ENCODE measurements at regions of chr16 and their contacts with region 1.

Region 1: DNA sequence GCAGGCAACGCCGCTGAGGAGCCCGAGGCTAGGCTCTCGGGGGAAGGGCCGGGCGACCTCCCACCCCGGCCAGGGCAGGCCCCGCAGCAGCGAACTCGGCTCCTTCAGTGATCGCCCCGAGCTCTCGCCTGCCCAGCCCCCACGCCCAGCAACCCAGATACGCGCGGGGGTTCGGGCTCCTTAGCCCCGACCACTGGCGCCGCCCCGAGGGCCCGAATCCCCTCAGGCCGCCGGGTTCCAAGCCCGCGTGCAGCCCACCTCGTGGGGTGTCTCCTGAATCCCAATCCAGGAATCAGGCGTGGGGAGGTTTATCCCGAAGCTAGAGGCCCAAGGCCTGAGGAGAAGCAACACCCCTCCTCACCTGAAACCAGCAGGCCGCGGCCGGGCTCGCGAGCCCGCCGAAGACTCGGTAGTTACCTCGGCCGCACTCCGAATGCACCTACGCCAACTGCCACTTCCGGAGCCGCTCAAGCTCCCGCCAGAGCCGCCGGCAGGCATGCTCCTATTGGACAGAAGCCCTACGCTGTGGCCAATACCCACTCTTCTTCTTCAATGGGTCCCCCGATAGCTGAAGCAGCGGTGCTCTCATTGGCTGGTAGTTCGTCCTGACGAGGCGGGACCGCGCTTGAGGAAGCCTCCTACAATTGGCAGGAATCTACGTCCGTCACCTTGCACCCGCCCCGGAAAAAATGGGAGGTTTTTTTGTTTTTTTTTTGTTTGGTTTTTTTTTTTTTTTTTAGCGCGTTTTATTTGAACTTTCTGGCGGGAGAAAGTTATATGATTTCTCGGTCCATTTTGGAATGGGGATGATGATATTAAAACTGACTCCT is at the start of gene RFWD3:
- DNase-seq: peak; percentile 96
- ATAC-seq: peak; percentile 100
- H3K4me3 ChIP-seq: peak within 1 kb of the TSS; percentile 98
- H3K27ac ChIP-seq: peak within 1 kb of the TSS; percentile 70
- H3K4me1 ChIP-seq: no peaks in the 10 kb centered on the region; the same call in 1 of the 2 replicates
- H3K27me3 ChIP-seq: no peaks in the 10 kb centered on the region
- CTCF ChIP-seq: no peak
- total RNA-seq, gene RFWD3: 30.5 and 32.8 TPM in 2 replicates

Region 2: GRCh38 chr16:74601126-74601871 is 65.3 kb before region 1 on chr16:
- CTCF ChIA-PET with region 1: no interaction called
- POLR2A ChIA-PET with region 1: interaction called, 15 read pairs
- intact Hi-C with region 1: no loop called
- DNase-seq: peak; percentile 51
- ATAC-seq: peak; percentile 85
- H3K4me3 ChIP-seq: no peak overlapping the region; the same call in 1 of the 2 replicates
- H3K27ac ChIP-seq: peak overlapping the region; percentile 25
- H3K4me1 ChIP-seq: peaks cover 31% of the 10 kb centered on the region
- H3K27me3 ChIP-seq: no peaks in the 10 kb centered on the region
- CTCF ChIP-seq: no peak

Region 3: DNA sequence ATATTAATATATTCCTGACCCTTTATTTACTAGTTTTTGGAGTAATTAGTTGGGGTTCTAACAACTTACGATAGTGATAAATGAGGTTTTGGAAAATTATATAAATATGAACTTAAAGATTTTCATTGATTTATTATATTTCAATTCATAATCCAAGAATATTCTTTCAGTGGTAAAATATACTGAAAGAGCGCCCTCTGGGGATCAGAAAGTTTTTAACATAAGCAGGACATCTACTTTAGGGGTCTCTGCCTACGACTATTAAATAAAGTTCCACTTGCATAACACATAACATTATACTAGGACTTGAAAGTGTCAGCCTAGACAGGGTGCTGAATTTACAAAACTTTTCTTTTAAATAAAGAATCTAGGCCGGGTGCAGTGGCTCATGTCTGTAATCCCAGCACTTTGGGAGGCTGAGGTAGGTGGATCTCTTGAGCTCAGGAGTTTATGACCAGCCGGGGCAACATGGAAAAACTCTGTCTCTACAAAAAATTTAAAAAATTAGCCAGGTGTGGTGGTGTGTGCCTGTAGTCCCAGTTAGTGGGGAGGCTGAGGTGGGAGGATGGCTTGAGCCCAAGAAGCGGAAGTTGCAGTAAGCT is 15.6 kb before region 1 on chr16:
- CTCF ChIA-PET with region 1: no interaction called
- POLR2A ChIA-PET with region 1: interaction called, 14 read pairs
- intact Hi-C with region 1: no loop called
- DNase-seq: peak; percentile 17
- ATAC-seq: no peak
- H3K4me3 ChIP-seq: no peak overlapping the region
- H3K27ac ChIP-seq: no peak overlapping the region
- H3K4me1 ChIP-seq: peaks cover 6% of the 10 kb centered on the region; the same call in 1 of the 2 replicates
- H3K27me3 ChIP-seq: no peaks in the 10 kb centered on the region
- CTCF ChIP-seq: peak; percentile 55; the same call in 1 of the 2 replicates

Region 4: DNA sequence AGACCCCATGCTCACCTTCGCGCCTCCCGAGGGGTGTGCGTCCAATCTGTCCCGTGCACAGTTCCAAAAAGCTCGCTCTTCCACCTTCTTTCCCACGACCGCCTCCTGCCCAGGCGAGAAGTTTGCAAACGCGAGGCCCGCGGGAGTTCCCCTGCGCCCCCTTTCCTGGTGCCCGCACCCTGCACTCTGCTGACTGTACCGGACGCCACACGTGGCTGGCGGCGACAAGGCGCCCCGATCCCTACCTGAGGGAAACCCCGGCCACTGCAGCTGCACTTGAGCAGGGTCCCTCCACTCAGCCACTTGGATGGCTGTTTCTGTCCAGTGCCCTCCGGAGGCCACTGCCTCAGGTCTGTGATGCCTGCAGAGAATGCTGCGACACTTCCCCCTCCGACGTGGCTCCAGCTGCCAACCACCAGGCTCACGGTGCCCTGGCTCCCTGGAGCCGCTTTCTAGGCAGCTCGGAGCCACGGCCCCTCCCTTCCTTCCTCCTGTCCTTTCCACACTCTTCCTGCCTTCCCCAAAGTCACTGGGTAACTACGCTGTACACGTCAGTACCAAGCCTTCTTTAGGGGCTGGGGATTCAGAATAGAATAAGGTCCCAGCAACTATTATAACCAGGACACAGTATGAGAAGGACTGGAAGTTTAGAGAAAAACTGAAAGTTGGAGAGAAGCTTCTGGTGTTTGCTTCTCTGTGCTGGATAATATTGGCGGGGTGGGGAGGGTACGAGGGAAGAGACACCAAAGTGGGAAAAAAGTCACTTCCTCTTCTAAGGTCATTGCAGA is 34.0 kb after region 1 on chr16 and contains the start of gene MLKL:
- CTCF ChIA-PET with region 1: no interaction called
- POLR2A ChIA-PET with region 1: no interaction called
- intact Hi-C with region 1: loop called (anchors 2 kb)
- DNase-seq: peak; percentile 62
- ATAC-seq: peak; percentile 85
- H3K4me3 ChIP-seq: peak within 1 kb of the TSS; percentile 96
- H3K27ac ChIP-seq: peak within 1 kb of the TSS; percentile 92
- H3K4me1 ChIP-seq: peaks cover 25% of the 10 kb centered on the region
- H3K27me3 ChIP-seq: no peaks in the 10 kb centered on the region
- CTCF ChIP-seq: no peak
- total RNA-seq, gene MLKL: 29.6 and 30.9 TPM in 2 replicates